Lower leg skin (tissue), 4 donors: ENCODE measurements at regions of chr4 and their contacts with region 1.

Region 1: DNA sequence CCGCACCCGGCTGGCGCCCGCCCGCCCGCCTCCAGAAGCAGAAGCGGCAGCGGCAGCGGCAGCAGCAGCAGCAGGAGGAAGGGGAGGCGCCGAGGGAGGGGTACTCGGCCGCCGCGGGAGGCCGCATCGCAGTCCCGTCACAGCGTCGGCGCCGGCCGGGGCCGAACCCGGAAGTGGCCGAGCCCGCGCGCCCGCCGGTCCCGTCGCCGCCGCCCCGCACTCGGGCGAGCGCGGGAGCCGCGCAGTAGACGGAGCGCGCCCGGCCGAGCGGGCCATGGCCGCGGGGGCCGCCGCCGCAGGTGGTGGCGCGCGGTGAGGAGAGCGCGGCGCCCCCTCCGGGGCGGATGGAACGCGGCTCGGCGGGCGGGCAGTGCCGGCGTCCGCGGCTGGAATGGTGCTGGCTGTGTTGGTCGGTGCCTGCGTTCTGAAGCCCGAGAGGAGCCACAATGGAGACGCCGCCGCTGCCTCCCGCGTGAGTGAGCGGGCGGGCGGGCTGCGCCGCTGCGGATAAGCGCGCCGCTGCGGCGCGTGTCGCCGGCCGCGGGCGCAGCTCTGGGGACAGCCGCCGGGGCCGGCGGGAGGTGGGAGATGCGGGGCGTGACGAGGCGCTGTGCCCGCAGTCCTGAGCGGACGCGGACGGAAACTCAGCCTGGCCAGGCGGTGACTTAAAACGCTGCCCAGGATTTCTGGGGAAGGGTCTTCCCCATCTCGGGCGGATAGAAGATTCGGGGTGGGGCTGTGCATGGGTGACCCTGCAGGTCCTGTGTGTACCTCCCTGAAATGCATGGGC is at the start of gene KLHL2:
- DNase-seq: peak; percentile 69 to 93
- H3K4me3 ChIP-seq: peak within 1 kb of the TSS; percentile 91
- CTCF ChIP-seq: no peak
- POLR2A ChIP-seq: no peak
- total RNA-seq, gene KLHL2: 15.1 to 15.9 (median 15.7) TPM

Region 2: GRCh38 chr4:165177725-165178666 is 29.6 kb before region 1 on chr4:
- intact Hi-C with region 1: no loop called
- DNase-seq: no peak
- H3K4me3 ChIP-seq: no peak overlapping the region
- CTCF ChIP-seq: no peak
- POLR2A ChIP-seq: no peak

Region 3: DNA sequence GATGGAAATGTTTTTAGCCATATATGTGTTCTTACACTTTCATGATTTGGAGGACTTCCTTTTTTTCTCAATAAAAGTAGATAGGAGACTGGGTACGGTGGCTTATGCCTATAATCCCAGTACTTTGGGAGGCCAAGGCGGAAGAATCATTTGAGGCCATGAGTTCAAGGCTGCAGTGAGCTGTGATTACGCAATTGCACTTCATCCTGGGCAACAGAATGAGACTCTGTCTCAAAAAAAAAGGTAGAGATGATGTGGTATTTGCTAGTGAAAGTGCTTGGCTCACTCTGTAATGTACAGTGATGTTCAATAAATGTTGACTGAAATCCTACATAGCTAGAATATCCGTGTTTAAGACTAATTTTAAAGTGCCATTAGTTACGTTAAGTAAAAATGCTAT is 27.1 kb after region 1 on chr4:
- intact Hi-C with region 1: no loop called
- DNase-seq: no peak
- H3K4me3 ChIP-seq: no peak overlapping the region
- CTCF ChIP-seq: no peak
- POLR2A ChIP-seq: no peak

Region 4: DNA sequence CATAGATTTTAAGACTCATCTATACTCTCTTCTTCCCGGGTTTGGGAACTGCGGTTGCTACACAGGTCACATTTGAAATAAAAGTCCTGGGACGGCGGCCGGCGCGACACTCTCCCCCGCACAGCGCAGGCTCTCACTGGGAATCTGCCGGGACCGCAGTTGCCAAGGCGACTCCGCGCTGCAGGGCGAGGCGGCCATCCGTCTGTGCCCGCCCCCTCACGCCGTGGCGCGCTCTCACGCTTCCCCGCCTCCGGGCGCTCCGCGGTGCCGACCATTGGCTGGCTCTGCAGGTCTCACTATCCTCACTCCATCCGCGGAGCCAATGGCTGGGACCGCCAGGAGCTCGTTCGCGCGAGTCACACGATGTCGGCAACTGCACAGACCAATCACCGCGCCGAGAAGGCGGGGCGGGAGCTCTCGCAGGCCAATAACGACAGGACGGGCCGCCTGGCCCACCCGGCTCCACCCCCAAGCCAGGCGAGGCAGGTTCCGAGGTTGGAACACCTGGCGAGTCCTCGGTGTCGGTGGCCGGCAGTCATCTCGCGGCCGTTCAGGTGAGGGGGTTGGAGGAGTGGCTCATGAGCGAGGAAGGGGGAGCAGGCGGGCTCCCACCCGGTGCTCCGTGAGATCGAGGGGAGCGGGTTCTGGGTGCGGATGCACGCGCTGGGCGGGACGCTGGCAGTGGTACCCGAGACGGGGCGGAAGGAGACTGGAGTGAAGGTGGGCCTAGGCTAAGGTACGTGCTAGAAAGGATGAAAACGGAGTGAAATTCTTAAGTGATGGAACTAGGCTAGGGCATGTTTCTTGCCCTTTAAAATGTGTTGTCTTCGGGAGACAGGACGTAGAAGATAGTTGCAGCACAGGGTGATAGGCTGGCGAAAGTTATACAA is 119.8 kb after region 1 on chr4 and contains the start of gene MSMO1:
- intact Hi-C with region 1: loop called (anchors 10 kb)
- DNase-seq: peak; percentile 99 to 100
- H3K4me3 ChIP-seq: peak within 1 kb of the TSS; percentile 89
- CTCF ChIP-seq: no peak
- POLR2A ChIP-seq: no peak
- total RNA-seq, gene MSMO1: 48.3 to 165 (median 104) TPM

Region 5: GRCh38 chr4:166637816-166638215 is 1430.2 kb after region 1 on chr4:
- intact Hi-C with region 1: no loop called
- DNase-seq: no peak
- H3K4me3 ChIP-seq: no peak overlapping the region
- CTCF ChIP-seq: no peak
- POLR2A ChIP-seq: no peak